Activated CD4-positive, alpha-beta T cell treated with anti-CD3 and anti-CD28 coated beads for 36 hours (primary cell): ENCODE measurements at regions of chr3 and their contacts with region 1.

Region 1: GRCh38 chr3:187919048-187919447 is 173.8 kb upstream of the BCL6 start:
- DNase-seq: peak; percentile 69
- ATAC-seq: peak; percentile 50
- H3K4me3 Mint-ChIP-seq: peak overlapping the region; percentile 59
- H3K27ac Mint-ChIP-seq: peak overlapping the region; percentile 86
- H3K4me1 Mint-ChIP-seq: peaks cover 70% of the 10 kb centered on the region
- H3K27me3 Mint-ChIP-seq: peaks cover 2% of the 10 kb centered on the region

Region 2: DNA sequence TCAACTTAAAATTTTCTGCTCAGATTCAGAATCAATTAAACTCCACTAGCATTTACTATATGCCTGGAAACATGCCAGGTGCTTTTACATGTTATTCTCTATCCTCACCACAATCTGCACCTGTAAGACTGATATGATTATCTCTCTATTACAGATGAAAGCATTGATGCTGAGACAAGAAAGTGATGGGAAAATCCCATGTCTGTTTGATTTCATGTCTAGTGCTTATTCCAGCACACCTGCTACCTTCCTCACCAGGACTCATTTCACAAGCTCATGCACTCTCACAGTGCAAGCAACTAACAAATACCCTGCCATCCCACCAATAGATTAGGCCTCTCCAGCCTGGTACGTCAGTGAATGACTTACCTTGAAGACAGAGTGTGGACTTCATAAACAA is 148.8 kb before region 1 on chr3:
- CTCF ChIA-PET with region 1: no interaction called
- POLR2A ChIA-PET with region 1: interaction called, 9 read pairs
- intact Hi-C with region 1: loop called in 1 of 2 experiments (anchors 1 kb)
- DNase-seq: peak; percentile 56
- ATAC-seq: peak; percentile 97
- H3K4me3 Mint-ChIP-seq: peak overlapping the region; percentile 8
- H3K27ac Mint-ChIP-seq: peak overlapping the region; percentile 76
- H3K4me1 Mint-ChIP-seq: peaks cover 39% of the 10 kb centered on the region
- H3K27me3 Mint-ChIP-seq: peaks cover 13% of the 10 kb centered on the region

Region 3: GRCh38 chr3:187870360-187871203 is 48.5 kb before region 1 on chr3:
- CTCF ChIA-PET with region 1: no interaction called
- POLR2A ChIA-PET with region 1: interaction called, 5 read pairs
- intact Hi-C with region 1: loop called in 1 of 2 experiments (anchors 1 kb)
- DNase-seq: peak; percentile 31
- ATAC-seq: peak; percentile 85
- H3K4me3 Mint-ChIP-seq: no peak overlapping the region
- H3K27ac Mint-ChIP-seq: peak overlapping the region; percentile 44
- H3K4me1 Mint-ChIP-seq: peaks cover 8% of the 10 kb centered on the region
- H3K27me3 Mint-ChIP-seq: no peaks in the 10 kb centered on the region

Region 4: GRCh38 chr3:187899246-187899645 is 19.8 kb before region 1 on chr3:
- CTCF ChIA-PET with region 1: no interaction called
- POLR2A ChIA-PET with region 1: no interaction called
- intact Hi-C with region 1: no loop called
- DNase-seq: no peak
- ATAC-seq: no peak
- H3K4me3 Mint-ChIP-seq: no peak overlapping the region
- H3K27ac Mint-ChIP-seq: no peak overlapping the region
- H3K4me1 Mint-ChIP-seq: peaks cover 6% of the 10 kb centered on the region
- H3K27me3 Mint-ChIP-seq: no peaks in the 10 kb centered on the region

Region 5: DNA sequence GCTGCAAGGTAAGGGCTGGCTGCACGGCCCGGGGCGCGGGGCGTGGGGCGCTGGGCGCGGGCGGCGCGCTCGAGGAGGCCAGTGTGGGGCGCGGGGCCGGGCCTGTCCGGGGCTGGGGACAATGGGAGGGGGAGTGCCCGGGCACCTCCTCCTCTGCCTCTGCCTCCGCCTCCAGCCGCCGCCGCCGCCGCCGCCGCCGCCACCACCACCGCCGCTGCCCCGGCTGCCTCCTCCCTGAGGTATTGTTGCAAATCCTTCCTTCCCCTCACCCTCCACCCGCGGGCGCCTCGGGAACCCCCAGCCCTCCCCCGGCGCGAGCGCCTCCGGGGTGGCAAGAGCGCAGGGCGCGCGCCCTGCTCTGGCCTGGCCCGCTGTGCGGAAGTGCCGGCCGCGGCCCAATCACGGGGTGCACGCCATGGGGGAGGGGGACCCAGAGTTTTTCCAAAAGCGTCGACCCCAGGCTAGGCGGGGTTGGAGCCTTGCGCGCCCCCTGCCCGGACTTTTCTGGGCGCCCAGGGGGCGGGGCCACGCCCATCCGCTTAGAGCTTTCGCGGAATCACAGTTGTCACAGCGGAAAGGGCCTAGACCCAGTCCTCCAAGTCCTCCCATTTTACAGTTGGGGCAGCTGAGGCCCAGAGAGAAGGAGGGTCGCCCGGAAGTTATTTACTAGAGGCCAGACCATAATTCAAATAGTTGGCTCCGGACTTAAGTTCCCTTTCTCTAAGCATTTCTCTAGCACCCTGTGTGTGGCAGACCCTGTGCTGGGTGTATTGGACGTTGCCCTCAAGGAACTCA is 235.2 kb after region 1 on chr3 and contains the start of gene LPP:
- CTCF ChIA-PET with region 1: no interaction called
- POLR2A ChIA-PET with region 1: no interaction called
- intact Hi-C with region 1: loop called (anchors 2 to 5 kb)
- DNase-seq: peak; percentile 91
- ATAC-seq: peak; percentile 76
- H3K4me3 Mint-ChIP-seq: peak within 1 kb of the TSS; percentile 76
- H3K27ac Mint-ChIP-seq: peak within 1 kb of the TSS; percentile 95
- H3K4me1 Mint-ChIP-seq: peaks cover 64% of the 10 kb centered on the region
- H3K27me3 Mint-ChIP-seq: peaks cover 3% of the 10 kb centered on the region
- total RNA-seq, gene LPP: 34.7 to 40.6 TPM

Region 6: GRCh38 chr3:188286087-188286513 is 367.1 kb after region 1 on chr3:
- CTCF ChIA-PET with region 1: interaction called, 4 read pairs
- POLR2A ChIA-PET with region 1: no interaction called
- intact Hi-C with region 1: loop called (anchors 1 to 2 kb)
- DNase-seq: peak; percentile 29
- ATAC-seq: no peak
- H3K4me3 Mint-ChIP-seq: no peak overlapping the region
- H3K27ac Mint-ChIP-seq: peak overlapping the region; percentile 72
- H3K4me1 Mint-ChIP-seq: peaks cover 55% of the 10 kb centered on the region
- H3K27me3 Mint-ChIP-seq: no peaks in the 10 kb centered on the region

Region 7: GRCh38 chr3:188400494-188401243 is 481.6 kb after region 1 on chr3:
- CTCF ChIA-PET with region 1: interaction called, 3 read pairs
- POLR2A ChIA-PET with region 1: no interaction called
- intact Hi-C with region 1: loop called in 1 of 2 experiments (anchors 5 kb)
- DNase-seq: peak; percentile 46
- ATAC-seq: peak; percentile 85
- H3K4me3 Mint-ChIP-seq: no peak overlapping the region
- H3K27ac Mint-ChIP-seq: peak overlapping the region; percentile 26
- H3K4me1 Mint-ChIP-seq: peaks cover 69% of the 10 kb centered on the region
- H3K27me3 Mint-ChIP-seq: no peaks in the 10 kb centered on the region

Region 8: GRCh38 chr3:189324538-189325138 is 1405.6 kb after region 1 on chr3:
- CTCF ChIA-PET with region 1: no interaction called
- POLR2A ChIA-PET with region 1: no interaction called
- intact Hi-C with region 1: loop called in 1 of 2 experiments (anchors 10 kb)
- DNase-seq: peak; percentile 91
- ATAC-seq: peak; percentile 96
- H3K4me3 Mint-ChIP-seq: peak overlapping the region; percentile 49
- H3K27ac Mint-ChIP-seq: peak overlapping the region; percentile 96
- H3K4me1 Mint-ChIP-seq: peaks cover 67% of the 10 kb centered on the region
- H3K27me3 Mint-ChIP-seq: no peaks in the 10 kb centered on the region